GM10248 (cell line): ENCODE measurements at regions of chr3 and their contacts with region 1.

Region 1: DNA sequence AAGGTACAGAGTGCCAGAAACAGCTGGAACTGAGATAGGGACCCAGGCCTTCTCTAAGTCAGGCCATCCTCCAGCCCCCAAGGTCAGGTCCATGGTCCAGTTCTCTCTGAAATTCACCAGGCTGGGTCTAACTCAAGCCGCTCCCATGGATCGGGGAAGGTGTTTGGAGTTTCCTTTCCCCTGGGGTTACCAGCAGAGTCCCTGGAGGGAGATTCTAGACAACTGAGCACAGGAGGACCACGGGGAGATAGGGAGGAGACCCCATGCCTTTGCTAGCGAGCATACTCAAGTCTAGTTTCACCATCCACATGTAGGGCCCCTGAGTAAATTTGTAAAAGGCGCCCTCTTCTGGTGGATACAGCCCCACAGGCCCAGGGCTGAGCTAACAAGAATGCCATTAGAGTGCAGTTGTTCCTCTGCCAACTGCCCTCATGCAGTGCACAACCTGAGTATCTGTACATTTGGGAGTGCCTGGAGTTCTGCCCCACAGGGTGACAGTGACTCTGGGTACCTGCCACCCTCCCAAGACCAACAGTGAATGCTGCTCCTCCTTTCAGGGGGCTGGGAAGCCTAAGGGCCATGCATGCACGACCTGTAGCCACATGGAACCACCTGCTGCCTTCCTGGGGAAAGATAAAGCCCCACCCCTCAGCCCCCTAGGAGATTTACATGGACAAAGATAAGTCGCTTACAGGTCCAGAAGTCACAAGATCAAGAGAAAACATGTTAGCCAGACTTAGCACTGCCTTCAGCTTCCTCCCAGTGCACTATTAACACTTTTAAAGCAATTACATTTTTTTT is 89.0 kb downstream of the IQSEC1 start:
- DNase-seq: peak; percentile 73
- CTCF ChIP-seq: peak; percentile 65

Region 2: GRCh38 chr3:12959838-12960378 is 24.3 kb before region 1 on chr3:
- CTCF ChIA-PET with region 1: interaction called, 163 read pairs
- POLR2A ChIA-PET with region 1: no interaction called
- DNase-seq: no peak
- CTCF ChIP-seq: no peak

Region 3: GRCh38 chr3:12967606-12968351 is 16.4 kb before region 1 on chr3:
- CTCF ChIA-PET with region 1: interaction called, 163 read pairs
- POLR2A ChIA-PET with region 1: no interaction called
- DNase-seq: peak; percentile 100
- CTCF ChIP-seq: no peak

Region 4: GRCh38 chr3:13004376-13004775 is 20.2 kb after region 1 on chr3:
- CTCF ChIA-PET with region 1: interaction called, 131 read pairs
- POLR2A ChIA-PET with region 1: no interaction called
- DNase-seq: no peak
- CTCF ChIP-seq: no peak

Region 5: GRCh38 chr3:13073326-13074005 is 89.2 kb after region 1 on chr3 and contains the start of gene IQSEC1:
- CTCF ChIA-PET with region 1: no interaction called
- POLR2A ChIA-PET with region 1: no interaction called
- DNase-seq: peak; percentile 91
- CTCF ChIP-seq: no peak